Endothelial cell of umbilical vein (primary cell): ENCODE measurements at regions of chr17 and their contacts with region 1.

Region 1: GRCh38 chr17:55421179-55421934 is at the start of gene MMD:
- DNase-seq: no peak
- H3K4me3 ChIP-seq: peak within 1 kb of the TSS; percentile 89 to 97 (median 92)
- H3K27ac ChIP-seq: peak within 1 kb of the TSS; percentile 61
- H3K4me1 ChIP-seq: peaks cover 13% of the 10 kb centered on the region
- H3K27me3 ChIP-seq: peaks cover 8 to 28% of the 10 kb centered on the region in 2 experiments
- CTCF ChIP-seq: no peak
- POLR2A ChIP-seq: no peak
- total RNA-seq, gene MMD: 9.3 TPM in 2 replicates

Region 2: GRCh38 chr17:55383771-55384642 is 37.4 kb before region 1 on chr17:
- CTCF ChIA-PET with region 1: no interaction called
- POLR2A ChIA-PET with region 1: no interaction called
- dilution Hi-C with region 1: no loop called
- intact Hi-C with region 1: no loop called
- DNase-seq: no peak
- H3K4me3 ChIP-seq: no peak overlapping the region
- H3K27ac ChIP-seq: no peak overlapping the region
- H3K4me1 ChIP-seq: no peaks in the 10 kb centered on the region
- H3K27me3 ChIP-seq: no peaks in the 10 kb centered on the region
- CTCF ChIP-seq: no peak
- POLR2A ChIP-seq: no peak

Region 3: DNA sequence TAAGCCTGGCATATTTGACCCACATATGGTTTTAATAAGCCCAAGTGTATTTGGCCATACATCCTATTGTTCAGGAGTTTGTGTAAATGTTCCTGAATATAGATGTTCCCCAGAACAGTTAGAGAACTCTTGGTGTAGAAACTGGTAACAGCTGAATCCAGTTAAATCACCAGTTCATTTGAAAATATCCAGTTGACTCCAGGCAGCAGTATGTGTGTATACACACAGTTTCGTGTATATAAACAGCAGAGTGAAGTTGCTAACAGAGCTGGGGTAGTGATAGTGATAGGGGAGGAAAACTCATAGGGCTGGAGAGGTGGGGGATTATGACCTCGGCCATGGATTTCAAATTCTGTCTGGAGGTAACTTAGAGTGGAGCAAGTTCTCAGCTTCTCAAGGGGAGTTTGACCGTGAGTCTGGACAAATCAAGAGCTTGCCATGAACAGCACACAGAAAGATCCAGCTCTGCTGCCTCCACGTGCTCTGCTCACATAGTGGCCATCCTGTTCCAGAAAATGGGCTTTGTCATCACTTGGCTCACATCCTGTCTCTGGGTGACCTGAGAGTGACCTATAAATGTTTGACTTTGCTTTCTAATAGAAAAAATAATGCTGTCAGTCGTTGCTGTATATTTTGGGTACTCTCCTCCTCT is 30.9 kb after region 1 on chr17:
- CTCF ChIA-PET with region 1: interaction called, 3 read pairs
- POLR2A ChIA-PET with region 1: no interaction called
- dilution Hi-C with region 1: no loop called
- intact Hi-C with region 1: loop called (anchors 2 kb)
- DNase-seq: peak; percentile 64
- H3K4me3 ChIP-seq: no peak overlapping the region
- H3K27ac ChIP-seq: peak overlapping the region; percentile 47
- H3K4me1 ChIP-seq: peaks cover 9% of the 10 kb centered on the region
- H3K27me3 ChIP-seq: no peaks in the 10 kb centered on the region
- CTCF ChIP-seq: no peak
- POLR2A ChIP-seq: no peak

Region 4: DNA sequence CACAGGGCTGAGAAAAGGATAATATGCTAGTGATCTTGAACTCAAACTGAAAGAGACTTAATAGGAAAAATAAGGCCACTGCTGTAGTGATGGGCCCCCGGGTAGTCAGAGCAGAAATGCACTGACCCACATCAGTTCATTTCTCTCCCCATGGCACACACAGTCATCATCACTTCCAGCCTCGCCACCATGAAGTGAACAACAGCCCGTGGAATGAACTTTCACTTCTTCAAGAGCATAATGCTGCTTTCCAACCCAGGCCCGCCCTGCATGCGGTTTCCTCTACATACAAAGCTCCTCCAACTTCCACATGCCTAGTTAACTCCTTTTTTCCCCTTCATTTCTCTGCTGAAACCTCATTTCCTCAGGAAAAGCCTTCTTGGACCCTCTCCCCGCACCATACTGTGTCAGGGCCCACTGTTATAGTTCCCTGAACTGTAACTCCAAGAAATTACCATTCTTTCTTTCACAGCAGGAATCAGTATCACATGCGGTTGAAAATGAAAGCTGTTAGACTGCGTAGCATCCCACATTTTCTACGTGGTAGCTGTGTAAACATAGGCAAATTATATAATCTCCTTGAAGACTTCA is 155.7 kb after region 1 on chr17:
- CTCF ChIA-PET with region 1: no interaction called
- POLR2A ChIA-PET with region 1: no interaction called
- dilution Hi-C with region 1: no loop called
- intact Hi-C with region 1: loop called (anchors 10 kb)
- DNase-seq: peak; percentile 61
- H3K4me3 ChIP-seq: peak overlapping the region in 1 of 3 experiments; percentile 24
- H3K27ac ChIP-seq: peak overlapping the region; percentile 66
- H3K4me1 ChIP-seq: peaks cover 14% of the 10 kb centered on the region
- H3K27me3 ChIP-seq: no peaks in the 10 kb centered on the region
- CTCF ChIP-seq: no peak
- POLR2A ChIP-seq: no peak